Activated CD4-positive, alpha-beta T cell treated with anti-CD3 and anti-CD28 coated beads, Interleukin-2, amount 10 ng/mL, durations not matched to agents 24 days and 14 days (primary cell): ENCODE measurements at regions of chr6 and their contacts with region 1.

Region 1: DNA sequence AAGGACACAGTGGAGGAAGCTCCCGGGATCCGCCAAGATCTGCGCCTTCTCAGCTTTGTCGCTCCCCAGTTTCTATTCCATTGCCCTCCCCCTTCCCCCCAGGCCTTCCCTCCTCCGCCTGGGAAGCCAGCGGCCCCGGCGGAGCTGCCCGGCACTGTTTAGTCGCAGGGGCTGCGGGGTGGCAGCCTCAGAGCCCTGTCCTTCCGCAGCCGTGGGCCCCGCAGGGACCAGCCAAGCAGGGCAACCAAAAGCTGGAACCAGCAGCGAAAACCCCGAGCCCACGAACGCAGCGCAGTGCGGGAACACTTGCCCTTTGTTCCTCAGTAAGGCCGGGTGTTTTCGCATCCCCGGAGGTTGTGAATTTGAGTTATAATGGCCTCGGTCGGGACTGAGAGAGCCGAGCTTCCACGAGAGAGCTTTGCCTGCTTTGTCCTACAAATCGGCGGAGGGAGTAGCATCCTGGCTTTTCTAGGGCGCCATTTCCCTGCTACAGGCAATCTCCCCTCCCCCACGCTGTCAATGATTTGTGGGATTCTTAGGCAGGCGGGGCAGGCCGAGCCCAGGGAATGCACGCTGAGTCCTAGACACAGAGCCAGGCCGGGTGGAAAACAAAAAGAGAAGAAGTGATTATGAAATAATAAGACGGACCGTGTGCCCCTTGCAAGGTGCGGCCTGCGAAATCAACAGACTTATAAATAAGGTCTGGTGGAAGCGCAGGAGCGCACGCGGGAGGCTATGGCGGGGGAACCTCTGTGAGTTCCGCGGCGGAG is 4.0 kb upstream of the TUBB2B start:
- DNase-seq: no peak
- H3K4me3 Mint-ChIP-seq: peak overlapping the region; percentile 47
- H3K27ac Mint-ChIP-seq: no peak overlapping the region
- H3K4me1 Mint-ChIP-seq: peaks cover 26% of the 10 kb centered on the region
- H3K27me3 Mint-ChIP-seq: peaks cover 81% of the 10 kb centered on the region

Region 2: DNA sequence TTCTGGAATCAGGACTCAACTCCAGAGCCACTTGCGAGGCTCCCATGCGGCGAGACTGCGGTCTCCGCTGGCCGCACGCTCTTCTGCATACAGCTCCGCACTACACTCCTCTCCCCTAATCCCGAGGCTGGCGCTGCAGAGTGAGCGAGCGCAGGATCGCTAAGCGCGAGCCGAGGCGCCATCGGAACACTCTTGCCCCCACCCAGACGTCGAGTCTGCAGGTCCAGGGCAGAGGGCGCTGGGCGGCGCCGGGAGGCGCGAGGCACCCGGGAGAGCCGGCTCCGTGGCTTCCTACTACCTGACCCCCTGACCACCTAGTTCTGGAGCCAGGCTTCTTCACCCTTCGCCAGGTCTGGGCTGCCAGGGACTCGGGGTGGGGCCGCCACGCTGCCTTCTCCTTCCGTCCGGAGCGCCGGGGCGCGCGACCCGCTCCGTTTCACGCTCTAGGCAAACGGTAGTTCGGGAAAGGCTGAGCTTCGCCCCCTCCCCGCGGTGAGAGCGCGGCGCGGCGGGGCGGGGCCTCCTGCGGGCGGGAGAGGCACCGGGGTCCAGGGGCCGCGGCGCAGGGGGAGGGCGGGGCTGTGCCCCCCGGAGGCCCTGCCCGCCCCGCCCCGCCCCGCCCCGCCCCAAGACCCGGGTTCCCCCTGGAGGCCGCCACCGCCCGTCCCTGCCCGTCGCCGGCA is 68.7 kb before region 1 on chr6:
- intact Hi-C with region 1: loop called (anchors 2 kb)
- DNase-seq: peak; percentile 88
- H3K4me3 Mint-ChIP-seq: peak overlapping the region; percentile 77
- H3K27ac Mint-ChIP-seq: no peak overlapping the region
- H3K4me1 Mint-ChIP-seq: peaks cover 25% of the 10 kb centered on the region
- H3K27me3 Mint-ChIP-seq: peaks cover 46% of the 10 kb centered on the region

Region 3: DNA sequence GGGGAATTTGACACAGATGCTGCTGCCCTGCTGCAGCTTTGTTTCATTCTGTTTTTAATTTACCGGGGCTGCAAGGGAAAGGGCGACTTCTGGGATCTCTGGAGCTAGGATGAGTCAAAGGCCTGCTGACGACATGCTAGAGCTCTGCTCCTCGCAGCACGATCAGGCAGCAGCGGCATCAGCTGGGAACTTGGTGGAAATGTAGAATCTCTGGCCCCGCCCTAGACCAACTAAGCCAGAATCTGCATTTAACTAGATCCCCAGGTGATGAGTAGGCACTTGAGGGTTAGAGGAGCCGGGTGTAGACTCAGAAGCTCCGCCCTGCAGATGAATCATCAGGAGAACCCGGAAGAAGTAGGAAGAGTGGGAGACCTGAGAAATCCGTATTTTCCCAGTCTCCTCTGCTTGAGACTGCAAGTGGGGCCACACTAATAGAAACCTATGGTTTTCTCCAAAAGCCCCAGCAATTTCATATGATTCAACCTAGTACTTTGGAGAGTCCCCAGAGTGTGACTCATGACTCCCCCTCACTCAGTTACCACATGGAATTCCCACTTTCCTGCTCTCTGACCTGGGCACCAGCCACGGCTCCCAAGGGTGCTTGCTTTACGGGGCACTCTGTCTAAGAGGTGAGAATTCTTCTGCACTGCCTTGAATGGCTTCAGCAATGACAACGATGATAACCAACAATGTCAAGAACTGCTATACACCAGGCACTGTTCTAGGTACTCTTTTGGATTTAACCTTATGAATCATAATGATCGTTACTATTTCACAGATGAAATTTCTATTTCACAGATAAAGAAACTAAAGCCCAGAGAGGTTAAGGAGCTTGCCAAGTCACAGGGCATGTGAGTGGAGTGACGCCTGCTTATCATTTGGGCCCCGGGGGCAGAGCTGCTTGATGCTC is 22.1 kb before region 1 on chr6:
- intact Hi-C with region 1: loop called (anchors 2 kb)
- DNase-seq: peak; percentile 70
- H3K4me3 Mint-ChIP-seq: peak overlapping the region; percentile 46
- H3K27ac Mint-ChIP-seq: peak overlapping the region; percentile 94
- H3K4me1 Mint-ChIP-seq: peaks cover 25% of the 10 kb centered on the region
- H3K27me3 Mint-ChIP-seq: peaks cover 26% of the 10 kb centered on the region

Region 4: DNA sequence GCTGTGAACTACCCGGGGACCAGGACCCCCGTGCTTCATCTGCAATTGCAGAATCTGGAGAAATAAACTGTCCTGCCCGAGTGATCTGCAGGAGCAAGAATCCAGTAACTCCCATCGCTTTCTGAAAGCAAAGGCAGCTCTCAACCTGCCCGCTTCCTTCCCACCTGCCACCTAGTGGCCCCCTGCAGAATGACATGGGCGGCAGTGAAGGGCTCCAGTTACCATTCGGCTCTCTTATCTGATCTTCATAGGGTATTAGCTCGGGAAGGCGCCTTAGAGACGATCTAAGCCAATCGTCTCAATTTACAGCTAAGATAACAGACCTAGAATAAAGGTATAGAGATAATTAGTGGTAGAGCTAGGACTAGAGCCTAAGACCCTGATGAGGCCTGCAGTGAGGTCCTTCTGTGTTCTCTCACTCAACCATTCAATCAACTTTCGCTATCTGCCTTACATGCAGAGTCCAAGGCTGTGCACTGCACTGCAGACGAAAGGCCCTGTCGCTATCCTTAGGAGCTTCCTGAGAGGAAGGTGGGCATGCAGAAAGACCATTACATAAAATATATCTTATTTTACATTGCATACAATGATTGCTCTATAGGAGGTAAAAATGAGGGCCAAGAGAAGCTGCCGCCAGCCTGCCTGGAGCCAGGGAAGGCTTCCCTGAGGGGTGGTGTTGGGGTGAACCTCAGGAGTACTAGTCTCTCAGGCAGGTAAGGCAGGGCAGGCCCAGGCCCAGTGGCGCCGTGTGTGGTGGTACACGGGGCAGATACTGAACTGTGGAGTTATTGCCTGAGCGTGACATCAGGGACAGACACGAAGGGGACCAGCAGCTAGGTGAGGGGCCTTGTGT is 20.3 kb after region 1 on chr6:
- intact Hi-C with region 1: loop called (anchors 2 kb)
- DNase-seq: peak; percentile 95
- H3K4me3 Mint-ChIP-seq: peak overlapping the region; percentile 24
- H3K27ac Mint-ChIP-seq: no peak overlapping the region
- H3K4me1 Mint-ChIP-seq: peaks cover 6% of the 10 kb centered on the region
- H3K27me3 Mint-ChIP-seq: peaks cover 43% of the 10 kb centered on the region

Region 5: GRCh38 chr6:3263085-3263484 is 31.7 kb after region 1 on chr6:
- intact Hi-C with region 1: no loop called
- DNase-seq: no peak
- H3K4me3 Mint-ChIP-seq: no peak overlapping the region
- H3K27ac Mint-ChIP-seq: no peak overlapping the region
- H3K4me1 Mint-ChIP-seq: peaks cover 37% of the 10 kb centered on the region
- H3K27me3 Mint-ChIP-seq: no peaks in the 10 kb centered on the region

Region 6: GRCh38 chr6:3312604-3313231 is 81.3 kb after region 1 on chr6:
- intact Hi-C with region 1: no loop called
- DNase-seq: no peak
- H3K4me3 Mint-ChIP-seq: no peak overlapping the region
- H3K27ac Mint-ChIP-seq: no peak overlapping the region
- H3K4me1 Mint-ChIP-seq: peaks cover 2% of the 10 kb centered on the region
- H3K27me3 Mint-ChIP-seq: peaks cover 10% of the 10 kb centered on the region

Region 7: GRCh38 chr6:3456755-3457466 is 225.5 kb after region 1 on chr6 and contains the start of gene SLC22A23:
- intact Hi-C with region 1: loop called (anchors 5 kb)
- DNase-seq: peak; percentile 88
- H3K4me3 Mint-ChIP-seq: peak within 1 kb of the TSS; percentile 73
- H3K27ac Mint-ChIP-seq: peak within 1 kb of the TSS; percentile 38
- H3K4me1 Mint-ChIP-seq: peaks cover 5% of the 10 kb centered on the region
- H3K27me3 Mint-ChIP-seq: peaks cover 46% of the 10 kb centered on the region
- total RNA-seq, gene SLC22A23: 0.07 and 0.12 TPM in 2 replicates